Spleen (tissue), 13 donors: ENCODE measurements at regions of chr1 and their contacts with region 1.

Region 1: DNA sequence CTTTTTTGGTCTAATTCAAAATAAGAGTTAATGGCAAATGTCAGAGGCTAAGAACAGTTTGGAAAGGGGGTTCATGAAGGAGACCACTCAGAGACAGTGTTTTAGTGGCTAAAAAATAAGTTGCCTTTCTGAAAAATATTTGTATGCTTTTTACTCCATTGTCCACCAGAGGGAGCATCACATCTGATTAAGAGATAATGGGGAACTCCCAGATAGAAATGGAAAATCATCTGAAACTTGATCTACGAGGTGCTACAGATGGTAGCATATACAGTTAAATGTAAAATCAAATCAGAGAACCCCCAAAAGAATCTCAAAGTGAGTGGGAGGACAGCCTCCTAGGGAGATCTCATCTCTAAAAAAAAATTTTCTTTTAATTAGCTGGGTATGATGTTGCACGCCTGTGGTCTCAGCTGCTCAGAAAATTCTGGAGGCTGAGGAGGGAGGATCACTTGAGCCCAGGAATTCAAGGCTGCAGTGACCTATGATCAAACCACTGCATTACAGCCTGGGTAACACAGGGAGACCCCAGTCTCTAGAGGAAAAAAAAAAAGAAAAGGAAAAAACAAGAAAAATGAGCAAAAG is 9.7 kb downstream of the SMYD3 start:
- DNase-seq: no peak
- H3K4me3 ChIP-seq: no peak overlapping the region
- H3K27ac ChIP-seq: no peak overlapping the region
- H3K4me1 ChIP-seq: peaks cover 0 to 10% (median 5%) of the 10 kb centered on the region in 6 donors
- H3K27me3 ChIP-seq: no peaks in the 10 kb centered on the region
- CTCF ChIP-seq: peak; percentile 42 to 79 (median 70)
- POLR2A ChIP-seq: no peak

Region 2: DNA sequence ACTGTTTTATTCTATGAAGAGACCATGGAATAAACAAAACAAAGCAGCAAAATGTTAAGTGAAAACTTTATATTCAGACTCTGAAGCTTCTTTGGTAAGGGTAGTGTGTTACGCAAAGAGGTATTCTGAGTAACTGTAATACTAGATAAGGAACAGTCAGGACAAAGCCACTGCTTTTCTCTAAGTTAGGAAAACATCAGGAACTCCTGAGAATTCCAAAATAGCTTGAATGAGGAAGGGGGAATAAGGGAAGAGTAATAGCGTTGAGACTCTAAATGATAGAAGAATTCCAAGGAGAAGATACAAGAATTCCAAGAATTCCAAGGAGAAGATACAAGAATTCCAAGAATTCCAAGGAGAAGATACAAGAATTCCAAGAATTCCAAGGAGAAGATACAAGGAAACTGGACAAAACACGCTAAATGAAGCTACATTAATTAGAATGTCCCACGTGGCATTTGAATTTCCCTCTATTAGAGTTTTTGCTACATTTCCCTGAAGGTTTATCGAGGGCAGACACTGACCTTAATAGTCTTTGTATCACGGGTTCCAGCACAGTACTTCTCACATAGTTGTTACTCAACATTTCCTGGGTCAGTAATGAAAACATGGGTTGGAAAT is 61.9 kb before region 1 on chr1:
- intact Hi-C with region 1: no loop called
- DNase-seq: no peak
- H3K4me3 ChIP-seq: no peak overlapping the region
- H3K27ac ChIP-seq: no peak overlapping the region
- H3K4me1 ChIP-seq: no peaks in the 10 kb centered on the region
- H3K27me3 ChIP-seq: no peaks in the 10 kb centered on the region
- CTCF ChIP-seq: no peak
- POLR2A ChIP-seq: no peak

Region 3: DNA sequence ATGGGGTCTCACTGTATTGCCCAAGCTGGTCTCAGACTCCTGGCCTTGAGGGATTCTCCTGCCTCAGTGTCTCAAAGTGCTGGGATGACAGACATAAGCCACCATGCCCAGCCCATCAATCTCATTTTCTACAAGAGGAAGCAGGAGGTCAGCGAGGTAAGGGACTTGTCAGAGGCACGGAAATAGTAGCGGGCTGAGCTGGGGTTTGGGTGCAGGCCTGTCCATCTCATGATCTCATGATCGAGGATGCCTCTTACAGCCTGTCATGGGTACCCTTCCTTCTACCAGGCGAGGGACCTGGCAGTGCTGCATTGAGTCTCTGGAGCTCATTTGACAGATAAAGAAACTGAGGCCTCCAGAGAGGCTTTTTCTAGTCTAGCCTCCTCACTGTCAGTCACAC is 198.2 kb after region 1 on chr1:
- intact Hi-C with region 1: loop called (anchors 2 kb)
- DNase-seq: no peak
- H3K4me3 ChIP-seq: no peak overlapping the region
- H3K27ac ChIP-seq: no peak overlapping the region
- H3K4me1 ChIP-seq: peaks cover 0 to 19% (median 9%) of the 10 kb centered on the region in 6 donors
- H3K27me3 ChIP-seq: no peaks in the 10 kb centered on the region
- CTCF ChIP-seq: no peak
- POLR2A ChIP-seq: no peak